MCF 10A (cell line): ENCODE measurements at regions of chr7 and their contacts with region 1.

Region 1: DNA sequence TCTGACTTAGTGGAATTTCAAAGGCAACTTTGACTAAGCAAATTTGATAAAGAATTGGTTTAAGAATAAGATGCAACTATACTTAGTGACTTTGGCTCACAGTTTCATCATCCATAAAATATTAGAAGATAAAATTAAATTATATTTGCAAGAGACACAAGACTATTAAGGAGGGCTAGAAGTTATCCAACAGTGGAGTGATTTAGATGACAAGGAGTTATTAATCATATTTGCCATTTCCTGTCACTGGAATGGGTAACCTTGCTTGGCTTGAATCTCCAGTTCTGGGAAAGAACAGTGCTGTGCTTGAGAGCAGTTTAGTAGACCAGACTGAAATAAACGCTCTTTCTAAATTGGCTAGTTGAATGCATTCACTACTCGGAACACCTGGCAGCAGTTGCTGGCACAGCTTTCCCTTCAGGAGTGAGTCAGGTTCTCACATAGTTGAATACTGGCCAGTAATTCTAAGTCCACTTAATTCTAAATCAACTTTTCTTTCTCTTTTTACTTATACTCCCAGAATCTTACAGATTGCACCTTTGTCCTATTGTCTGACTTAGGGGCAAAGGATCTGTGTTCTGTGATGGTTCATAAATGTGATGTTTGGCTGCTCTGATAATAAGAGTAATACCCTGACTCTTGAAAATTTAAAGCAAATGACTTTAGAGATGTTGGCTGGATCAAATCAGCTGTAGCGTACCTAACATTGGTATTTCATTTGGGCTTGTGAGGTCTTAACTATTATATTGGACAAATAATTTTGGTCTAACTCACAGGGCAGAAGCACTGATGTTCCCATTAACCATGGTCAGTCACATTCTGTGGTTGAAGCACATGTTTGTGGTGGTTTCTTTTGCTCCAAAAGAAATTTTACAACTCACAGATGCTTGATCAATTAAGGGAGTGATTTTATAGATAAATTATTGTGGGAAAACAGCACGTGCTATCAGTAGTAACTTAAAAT is 16.6 kb downstream of the STMP1 start:
- DNase-seq: peak; percentile 85
- H3K4me3 Mint-ChIP-seq: peak overlapping the region; percentile 44
- H3K27ac Mint-ChIP-seq: peak overlapping the region; percentile 73
- H3K4me1 Mint-ChIP-seq: peaks cover 35% of the 10 kb centered on the region
- H3K27me3 Mint-ChIP-seq: no peaks in the 10 kb centered on the region
- CTCF ChIP-seq: no peak

Region 2: GRCh38 chr7:135704074-135704473 is 25.2 kb after region 1 on chr7:
- CTCF ChIA-PET with region 1: interaction called, 33 read pairs
- POLR2A ChIA-PET with region 1: interaction called, 12 read pairs
- intact Hi-C with region 1: no loop called
- DNase-seq: no peak
- H3K4me3 Mint-ChIP-seq: no peak overlapping the region
- H3K27ac Mint-ChIP-seq: no peak overlapping the region
- H3K4me1 Mint-ChIP-seq: peaks cover 18% of the 10 kb centered on the region
- H3K27me3 Mint-ChIP-seq: no peaks in the 10 kb centered on the region
- CTCF ChIP-seq: peak; percentile 12

Region 3: DNA sequence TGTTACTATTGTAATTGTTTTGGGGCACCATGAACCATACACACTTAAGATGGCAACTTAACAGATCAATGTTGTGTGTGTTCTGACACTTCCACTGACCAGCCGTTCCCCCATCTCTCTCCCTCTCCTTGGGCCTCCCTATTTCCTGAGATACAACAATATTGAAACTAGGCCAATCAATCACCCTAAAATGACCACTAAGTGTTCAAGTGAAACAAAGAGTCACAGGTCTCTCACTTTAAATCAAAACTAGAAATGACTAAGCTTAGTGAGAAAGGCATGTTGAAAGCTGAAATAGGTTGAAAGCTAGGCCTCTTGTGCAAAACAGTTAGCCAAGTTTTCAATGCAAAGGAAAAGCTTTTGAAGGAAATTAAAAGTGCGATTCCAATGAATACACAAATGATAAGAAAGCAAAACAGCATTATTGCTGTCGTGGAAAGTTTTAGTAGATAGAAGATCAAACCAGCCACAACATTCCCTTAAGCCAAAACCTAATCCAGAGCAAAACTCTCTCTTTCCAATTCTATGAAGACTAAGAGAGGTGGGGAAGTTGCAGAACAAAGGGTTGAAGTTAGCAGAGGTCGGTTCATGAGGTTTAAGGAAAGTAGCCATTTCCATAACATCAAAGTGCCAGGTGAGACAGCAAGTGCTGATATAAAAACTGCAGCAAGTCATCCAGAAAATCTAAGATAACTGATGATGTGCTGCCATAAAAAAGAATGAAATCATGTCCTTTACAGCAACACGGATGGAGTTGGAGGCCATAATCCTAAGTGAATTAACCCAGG is 207.6 kb after region 1 on chr7:
- CTCF ChIA-PET with region 1: no interaction called
- POLR2A ChIA-PET with region 1: no interaction called
- intact Hi-C with region 1: no loop called
- DNase-seq: no peak
- H3K4me3 Mint-ChIP-seq: no peak overlapping the region
- H3K27ac Mint-ChIP-seq: no peak overlapping the region
- H3K4me1 Mint-ChIP-seq: no peaks in the 10 kb centered on the region
- H3K27me3 Mint-ChIP-seq: no peaks in the 10 kb centered on the region
- CTCF ChIP-seq: no peak